Activated T-helper 2 cell treated with anti-CD3 and anti-CD28 coated beads, Interferon-gamma antibody, Interleukin-2, Interleukin-4, amounts not matched to agents 10 μg/mL and 5 μg/mL and 100 μg/mL, durations not matched to agents 14 hours and 24 hours and 36 hours (primary cell): ENCODE measurements at regions of chr17 and their contacts with region 1.

Region 1: DNA sequence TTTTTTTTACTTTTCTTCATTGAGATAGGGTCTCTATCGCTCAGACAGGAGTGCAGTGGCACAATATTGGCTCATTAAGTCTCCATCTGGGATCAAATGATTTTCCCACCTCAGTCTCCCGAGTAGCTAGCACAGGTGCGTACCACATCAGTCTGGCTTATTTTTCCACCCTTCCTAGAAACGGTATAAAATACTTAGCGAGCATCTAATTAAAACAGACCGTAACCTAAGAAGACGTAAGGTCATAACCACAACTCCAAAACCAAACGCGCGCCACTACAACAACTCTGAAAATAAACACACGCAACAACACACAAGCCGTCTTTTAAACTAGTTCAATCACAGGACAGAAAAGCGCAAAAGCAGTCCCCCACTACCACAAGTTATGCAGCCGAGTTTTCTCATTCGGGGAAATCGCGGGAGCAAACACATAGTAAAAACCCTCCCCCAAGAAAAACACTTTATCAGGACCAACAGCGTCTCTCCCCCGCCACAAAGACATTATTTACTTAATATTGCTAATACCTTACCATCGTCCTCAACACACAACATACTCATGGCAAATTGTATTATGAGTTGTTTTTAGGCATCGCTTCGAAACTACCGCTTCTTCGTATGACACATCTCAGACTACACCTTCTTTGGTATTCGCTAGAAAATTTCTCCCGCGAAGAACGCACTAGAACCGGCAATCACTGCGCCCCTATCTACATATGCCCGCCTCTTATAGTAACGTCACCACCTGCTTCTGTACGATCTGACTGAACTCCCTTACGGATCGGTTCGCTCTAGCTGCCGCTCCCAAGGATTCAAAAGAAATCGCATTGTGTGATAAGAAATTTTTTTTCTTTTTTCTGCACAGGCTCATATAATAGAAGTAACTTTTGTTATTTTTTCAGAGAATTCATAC is 32.8 kb downstream of the TEX14 start:
- DNase-seq: peak; percentile 73
- H3K4me3 Mint-ChIP-seq: peak overlapping the region; percentile 74
- H3K27ac Mint-ChIP-seq: peak overlapping the region; percentile 93
- H3K4me1 Mint-ChIP-seq: peaks cover 14% of the 10 kb centered on the region
- H3K27me3 Mint-ChIP-seq: peaks cover 8% of the 10 kb centered on the region

Region 2: DNA sequence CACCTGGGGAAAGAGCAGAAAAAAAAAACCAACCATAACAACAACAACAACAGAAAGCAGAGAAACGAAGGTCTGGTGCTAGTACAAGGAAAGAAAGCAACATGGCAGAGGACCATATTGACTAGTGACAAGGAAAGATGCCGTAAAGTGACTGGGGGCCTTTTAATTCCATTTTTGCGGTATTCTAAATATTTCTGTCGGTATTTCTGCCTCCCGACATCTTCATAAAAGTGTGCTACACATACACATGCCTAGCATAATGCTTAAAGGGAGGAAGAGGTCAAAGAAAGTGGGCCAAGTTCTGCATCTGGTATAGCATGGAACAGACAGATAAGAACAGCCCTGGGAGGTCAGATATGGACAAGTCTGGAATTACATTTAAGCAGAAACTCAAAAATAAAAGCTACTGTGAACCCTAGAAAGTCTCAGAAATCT is 222.2 kb before region 1 on chr17:
- intact Hi-C with region 1: no loop called
- DNase-seq: no peak
- H3K4me3 Mint-ChIP-seq: no peak overlapping the region
- H3K27ac Mint-ChIP-seq: no peak overlapping the region
- H3K4me1 Mint-ChIP-seq: no peaks in the 10 kb centered on the region
- H3K27me3 Mint-ChIP-seq: peaks cover 1% of the 10 kb centered on the region

Region 3: DNA sequence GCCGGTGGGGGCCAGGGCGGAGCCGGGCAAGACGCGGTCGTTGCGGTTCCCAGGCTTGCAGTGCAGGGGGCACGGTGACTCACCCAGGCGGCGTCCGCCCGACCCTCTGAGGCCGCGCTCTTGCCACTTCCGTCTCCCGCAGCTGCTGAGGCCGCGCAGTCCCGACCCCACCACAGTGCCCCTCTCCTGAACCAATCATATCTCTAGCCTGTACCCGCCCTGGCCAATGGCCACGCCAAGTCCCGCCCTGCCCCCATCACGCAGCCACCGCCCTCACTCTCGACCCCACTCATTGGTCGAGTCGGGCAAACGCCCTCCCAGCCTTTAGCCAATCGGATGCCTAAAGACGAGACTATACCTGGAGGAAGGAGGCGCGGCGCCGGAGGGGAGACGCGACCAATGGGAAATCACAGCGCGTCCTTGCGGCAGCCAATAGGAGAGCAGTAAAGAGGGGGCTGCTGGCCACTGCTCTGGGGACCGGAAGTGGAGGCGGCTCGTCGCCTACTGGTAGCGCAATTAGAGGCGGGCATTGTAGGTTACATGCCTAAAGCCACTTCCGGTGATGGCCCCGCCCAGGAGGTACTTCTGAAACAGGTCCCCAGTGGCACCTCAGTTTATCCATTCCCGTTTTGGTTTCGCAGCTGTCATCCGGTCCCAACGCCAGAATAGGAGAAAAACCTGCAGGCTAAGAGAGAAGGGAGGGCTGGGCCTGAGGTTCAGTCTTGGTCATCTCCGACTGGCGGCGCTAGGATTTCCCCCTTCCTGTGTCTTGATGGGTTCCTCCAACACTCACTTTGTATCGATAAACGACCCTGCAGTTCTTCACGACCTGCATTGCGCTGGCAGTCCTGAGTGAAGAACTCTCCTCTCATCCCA is 141.1 kb before region 1 on chr17:
- intact Hi-C with region 1: loop called (anchors 1 kb)
- DNase-seq: peak; percentile 100
- H3K4me3 Mint-ChIP-seq: peak overlapping the region; percentile 89
- H3K27ac Mint-ChIP-seq: peak overlapping the region; percentile 95
- H3K4me1 Mint-ChIP-seq: peaks cover 34% of the 10 kb centered on the region
- H3K27me3 Mint-ChIP-seq: peaks cover 2% of the 10 kb centered on the region

Region 4: DNA sequence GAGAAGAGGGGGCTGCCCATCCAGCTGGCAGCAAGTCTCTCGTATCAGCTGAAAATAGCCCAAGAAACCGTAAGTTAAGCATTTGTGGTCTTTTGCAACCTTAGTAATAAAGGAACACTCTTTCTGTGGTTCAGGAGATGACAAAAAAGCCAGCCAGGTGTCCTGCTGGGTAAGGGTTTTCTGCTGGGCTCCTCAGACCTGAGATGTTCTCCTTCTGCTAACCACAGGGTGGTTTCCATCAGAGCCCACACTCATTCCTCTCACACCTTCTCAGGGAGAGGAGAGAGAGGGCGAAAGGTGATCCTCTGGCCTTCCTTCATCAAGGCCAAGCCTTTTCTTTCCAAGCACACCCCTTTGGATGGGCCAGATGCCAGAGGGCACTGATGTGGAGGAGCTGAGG is 37.9 kb before region 1 on chr17:
- intact Hi-C with region 1: no loop called
- DNase-seq: no peak
- H3K4me3 Mint-ChIP-seq: no peak overlapping the region
- H3K27ac Mint-ChIP-seq: no peak overlapping the region
- H3K4me1 Mint-ChIP-seq: peaks cover 3% of the 10 kb centered on the region
- H3K27me3 Mint-ChIP-seq: no peaks in the 10 kb centered on the region

Region 5: DNA sequence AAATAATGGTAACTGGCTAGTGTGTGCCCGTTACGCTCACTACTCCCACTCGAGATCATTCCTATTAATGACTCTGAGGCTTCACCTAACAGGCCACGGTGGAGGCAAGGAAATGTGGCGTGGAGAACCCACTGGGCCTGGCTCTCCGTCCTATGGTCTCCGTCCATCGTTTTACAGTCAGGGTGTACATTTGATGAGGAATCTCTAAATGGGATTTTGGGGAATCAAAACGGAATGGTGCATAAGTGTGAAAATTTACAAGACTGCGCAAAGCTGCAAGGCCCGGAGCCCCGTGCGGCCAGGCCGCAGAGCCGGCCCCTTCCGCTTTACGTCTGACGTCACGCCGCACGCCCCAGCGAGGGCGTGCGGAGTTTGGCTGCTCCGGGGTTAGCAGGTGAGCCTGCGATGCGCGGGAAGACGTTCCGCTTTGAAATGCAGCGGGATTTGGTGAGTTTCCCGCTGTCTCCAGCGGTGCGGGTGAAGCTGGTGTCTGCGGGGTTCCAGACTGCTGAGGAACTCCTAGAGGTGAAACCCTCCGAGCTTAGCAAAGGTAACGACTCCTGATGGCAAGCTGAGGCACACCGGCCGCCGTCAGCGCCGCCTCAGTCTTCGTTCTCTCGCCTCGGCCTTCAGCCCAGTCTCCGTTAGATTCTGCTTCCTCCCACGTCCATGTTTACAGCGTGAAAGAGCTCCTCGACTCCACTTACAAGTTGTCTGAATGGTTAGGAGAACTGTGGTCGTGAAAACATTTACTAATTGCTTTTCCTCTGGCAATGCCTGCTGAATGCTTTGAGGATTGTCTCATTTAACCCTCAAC is 33.4 kb after region 1 on chr17 and contains the start of gene RAD51C:
- intact Hi-C with region 1: loop called (anchors 5 kb)
- DNase-seq: peak; percentile 85
- H3K4me3 Mint-ChIP-seq: peak within 1 kb of the TSS; percentile 91
- H3K27ac Mint-ChIP-seq: peak within 1 kb of the TSS; percentile 91
- H3K4me1 Mint-ChIP-seq: peaks cover 25% of the 10 kb centered on the region
- H3K27me3 Mint-ChIP-seq: peaks cover 3% of the 10 kb centered on the region
- total RNA-seq, gene RAD51C: 58.1 and 62.7 TPM in 2 replicates

Region 6: DNA sequence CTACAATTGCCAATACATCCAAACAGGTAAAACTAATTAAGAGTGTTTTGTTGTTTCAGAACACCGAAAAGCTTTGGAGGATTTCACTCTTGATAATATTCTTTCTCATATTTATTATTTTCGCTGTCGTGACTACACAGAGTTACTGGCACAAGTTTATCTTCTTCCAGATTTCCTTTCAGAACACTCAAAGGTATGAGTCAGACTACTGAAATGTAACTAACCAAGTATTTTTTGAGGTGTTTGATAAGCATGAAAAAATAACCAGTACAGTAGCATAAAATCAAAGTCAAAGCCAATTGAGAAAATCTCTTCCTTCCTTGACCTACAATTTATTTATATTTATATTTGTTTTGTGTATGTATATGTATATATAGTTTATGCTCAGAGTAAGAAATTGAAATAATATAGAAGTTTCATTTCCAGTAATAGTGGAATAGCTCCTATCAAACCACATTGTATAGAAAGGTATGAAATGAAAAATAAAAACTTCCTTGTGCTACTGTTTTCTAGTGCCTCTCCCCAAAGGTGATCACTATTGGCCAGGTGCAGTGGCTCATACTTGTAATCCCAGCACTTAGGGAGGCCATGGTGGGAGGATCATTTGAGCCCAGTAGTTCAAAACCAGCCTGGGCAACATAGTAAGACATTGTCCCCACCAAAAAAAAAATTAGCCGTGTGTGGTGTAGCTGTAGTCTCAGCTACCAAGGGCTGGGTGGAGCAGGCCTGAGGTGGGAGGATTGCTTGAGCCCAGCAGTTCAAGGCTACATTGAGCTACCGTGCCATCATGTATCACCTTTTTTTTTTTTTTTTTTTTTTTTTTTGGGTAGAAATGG is 44.3 kb after region 1 on chr17:
- intact Hi-C with region 1: loop called (anchors 2 kb)
- DNase-seq: no peak
- H3K4me3 Mint-ChIP-seq: no peak overlapping the region
- H3K27ac Mint-ChIP-seq: peak overlapping the region; percentile 83
- H3K4me1 Mint-ChIP-seq: peaks cover 39% of the 10 kb centered on the region
- H3K27me3 Mint-ChIP-seq: no peaks in the 10 kb centered on the region